ENCODE measurements at regions of chr16 and their contacts with region 1.

Region 1: GRCh38 chr16:68528686-68529379 is 10.3 kb upstream of the ZFP90 start:
- DNase-seq: peak; percentile 89 to 96
- ATAC-seq: peak; percentile 93 to 94 (median 93)
- H3K4me3 ChIP-seq: no peak overlapping the region
- H3K4me3 Mint-ChIP-seq: peak overlapping the region; percentile 90
- H3K27ac ChIP-seq: no peak overlapping the region
- H3K27ac Mint-ChIP-seq: peak overlapping the region; percentile 58 to 78
- H3K4me1 ChIP-seq: peaks cover 25% of the 10 kb centered on the region
- H3K4me1 Mint-ChIP-seq: peaks cover 18 to 22% of the 10 kb centered on the region in 2 donors
- H3K27me3 ChIP-seq: peaks cover 6% of the 10 kb centered on the region
- H3K27me3 Mint-ChIP-seq: peaks cover 0 to 7% of the 10 kb centered on the region in 2 donors
- CTCF ChIP-seq: peak; percentile 90

Region 2: GRCh38 chr16:68538880-68539701 is 10.3 kb after region 1 on chr16 and contains the start of gene ZFP90:
- intact Hi-C with region 1: no loop called
- DNase-seq: peak; percentile 83 to 92
- ATAC-seq: peak; percentile 86 to 94 (median 91)
- H3K4me3 ChIP-seq: peak within 1 kb of the TSS; percentile 99
- H3K4me3 Mint-ChIP-seq: peak within 1 kb of the TSS; percentile 99
- H3K27ac ChIP-seq: peak within 1 kb of the TSS; percentile 95
- H3K27ac Mint-ChIP-seq: peak within 1 kb of the TSS; percentile 97 to 100
- H3K4me1 ChIP-seq: peaks cover 16% of the 10 kb centered on the region
- H3K4me1 Mint-ChIP-seq: peaks cover 22 to 41% of the 10 kb centered on the region in 2 donors
- H3K27me3 ChIP-seq: no peaks in the 10 kb centered on the region
- H3K27me3 Mint-ChIP-seq: no peaks in the 10 kb centered on the region
- CTCF ChIP-seq: no peak
- total RNA-seq, gene ZFP90: 23.1 to 36.0 (median 35.3) TPM

Region 3: GRCh38 chr16:68592466-68593337 is 63.9 kb after region 1 on chr16:
- intact Hi-C with region 1: loop called (anchors 2 kb)
- DNase-seq: peak in 1 of 2 donors; percentile 64
- ATAC-seq: peak; percentile 42 to 55 (median 49)
- H3K4me3 ChIP-seq: no peak overlapping the region
- H3K4me3 Mint-ChIP-seq: no peak overlapping the region
- H3K27ac ChIP-seq: no peak overlapping the region
- H3K27ac Mint-ChIP-seq: no peak overlapping the region
- H3K4me1 ChIP-seq: peaks cover 6% of the 10 kb centered on the region
- H3K4me1 Mint-ChIP-seq: peaks cover 5 to 6% of the 10 kb centered on the region in 2 donors
- H3K27me3 ChIP-seq: no peaks in the 10 kb centered on the region
- H3K27me3 Mint-ChIP-seq: peaks cover 0 to 3% of the 10 kb centered on the region in 2 donors
- CTCF ChIP-seq: peak; percentile 41

Region 4: DNA sequence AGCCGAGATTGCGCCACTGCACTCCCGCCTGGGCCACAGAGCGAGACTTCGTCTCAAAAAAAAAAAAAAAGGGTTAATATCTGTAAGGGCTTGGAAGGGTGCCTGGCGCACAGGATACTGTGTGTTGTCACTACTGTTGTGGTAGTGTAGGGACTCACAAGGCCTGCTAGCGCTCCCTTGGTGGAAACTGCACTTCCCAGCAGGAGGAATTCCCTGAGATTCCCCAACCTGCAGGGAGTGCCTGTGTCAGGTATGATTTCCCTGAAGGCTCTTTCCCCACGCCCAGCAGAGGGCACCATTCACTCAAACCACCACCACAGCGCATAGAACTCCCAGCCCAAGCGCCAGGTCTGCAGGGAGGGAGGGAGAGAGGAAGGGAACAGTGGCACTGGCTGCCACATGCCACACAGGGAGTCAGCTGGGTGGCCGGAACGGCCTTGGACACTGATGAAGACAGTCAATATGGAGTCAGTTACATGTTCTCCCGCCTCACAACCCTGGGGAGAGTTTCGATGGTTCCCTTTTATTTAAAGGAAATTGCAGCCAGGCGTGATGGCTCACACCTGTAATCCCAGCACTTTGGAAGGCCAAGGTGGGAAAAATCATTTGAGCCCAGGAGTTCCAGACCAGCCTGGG is 175.5 kb after region 1 on chr16:
- intact Hi-C with region 1: loop called (anchors 10 kb)
- DNase-seq: peak; percentile 27 to 69
- ATAC-seq: peak in 1 of 3 donors; percentile 59
- H3K4me3 ChIP-seq: no peak overlapping the region
- H3K4me3 Mint-ChIP-seq: no peak overlapping the region
- H3K27ac ChIP-seq: no peak overlapping the region
- H3K27ac Mint-ChIP-seq: no peak overlapping the region
- H3K4me1 ChIP-seq: peaks cover 6% of the 10 kb centered on the region
- H3K4me1 Mint-ChIP-seq: no peaks in the 10 kb centered on the region
- H3K27me3 ChIP-seq: no peaks in the 10 kb centered on the region
- H3K27me3 Mint-ChIP-seq: peaks cover 0 to 4% of the 10 kb centered on the region in 2 donors
- CTCF ChIP-seq: peak; percentile 36

Region 5: DNA sequence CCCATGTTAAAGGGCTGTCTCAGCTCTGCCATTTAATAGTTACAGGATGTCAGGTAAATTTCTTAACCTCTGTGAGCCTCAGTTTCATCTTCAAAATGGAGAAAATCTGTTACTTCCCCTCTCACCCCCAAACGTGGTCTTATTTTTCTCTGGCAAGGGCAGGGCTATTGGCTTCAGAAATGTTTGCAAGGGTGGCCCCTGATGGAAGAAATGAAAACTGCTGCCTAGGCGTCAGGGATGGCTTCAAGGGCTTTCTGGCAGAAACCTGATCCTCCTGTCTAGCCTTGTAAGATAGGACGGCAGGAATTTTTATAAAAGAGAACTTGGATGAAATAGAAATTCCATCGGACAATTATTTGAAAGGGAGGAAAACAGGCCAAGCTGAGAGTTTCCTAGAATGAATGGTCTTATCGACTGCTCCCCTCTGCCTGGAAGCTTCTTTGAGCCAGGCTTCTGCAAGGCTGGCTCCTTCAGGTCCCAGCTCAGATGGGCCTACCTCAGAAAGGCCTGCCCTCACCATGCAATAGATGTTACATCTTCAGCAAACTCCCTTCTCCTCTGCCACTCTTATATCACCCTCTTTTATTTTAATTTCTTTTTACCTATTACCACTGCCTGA is 271.5 kb after region 1 on chr16:
- intact Hi-C with region 1: loop called (anchors 2 kb)
- DNase-seq: peak in 1 of 2 donors; percentile 56
- ATAC-seq: peak in 2 of 3 donors; percentile 54 to 69
- H3K4me3 ChIP-seq: no peak overlapping the region
- H3K4me3 Mint-ChIP-seq: no peak overlapping the region
- H3K27ac ChIP-seq: no peak overlapping the region
- H3K27ac Mint-ChIP-seq: no peak overlapping the region
- H3K4me1 ChIP-seq: no peaks in the 10 kb centered on the region
- H3K4me1 Mint-ChIP-seq: no peaks in the 10 kb centered on the region
- H3K27me3 ChIP-seq: no peaks in the 10 kb centered on the region
- H3K27me3 Mint-ChIP-seq: no peaks in the 10 kb centered on the region
- CTCF ChIP-seq: peak; percentile 32

Region 6: GRCh38 chr16:68843482-68844210 is 314.8 kb after region 1 on chr16 and contains the start of gene TANGO6:
- intact Hi-C with region 1: loop called (anchors 2 kb)
- DNase-seq: peak; percentile 85 to 93
- ATAC-seq: peak; percentile 96 to 98 (median 96)
- H3K4me3 ChIP-seq: peak within 1 kb of the TSS; percentile 89
- H3K4me3 Mint-ChIP-seq: peak within 1 kb of the TSS; percentile 99
- H3K27ac ChIP-seq: peak within 1 kb of the TSS; percentile 70
- H3K27ac Mint-ChIP-seq: peak within 1 kb of the TSS; percentile 69 to 88
- H3K4me1 ChIP-seq: peaks cover 21% of the 10 kb centered on the region
- H3K4me1 Mint-ChIP-seq: peaks cover 27% of the 10 kb centered on the region in 2 donors
- H3K27me3 ChIP-seq: no peaks in the 10 kb centered on the region
- H3K27me3 Mint-ChIP-seq: no peaks in the 10 kb centered on the region
- CTCF ChIP-seq: no peak
- total RNA-seq, gene TANGO6: 21.2 to 27.3 (median 23.9) TPM

Region 7: DNA sequence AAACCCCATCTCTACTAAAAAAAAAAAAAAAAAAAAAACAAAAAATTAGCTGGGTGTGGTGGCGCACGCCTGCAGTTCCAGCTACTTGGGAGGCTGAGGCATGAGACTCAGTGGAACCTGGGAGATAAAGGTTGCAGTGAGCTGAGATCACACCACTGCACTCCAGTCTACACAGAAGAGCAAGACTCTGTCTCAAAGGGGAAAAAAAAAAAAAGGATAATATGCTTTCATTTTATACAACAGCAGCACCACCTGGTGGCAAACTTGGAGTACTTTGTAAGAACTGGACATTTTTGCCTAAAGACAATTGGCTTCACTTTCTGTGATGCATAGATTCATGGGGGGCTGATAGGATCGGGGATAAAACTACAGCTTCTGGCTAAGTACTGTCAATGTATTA is 595.1 kb after region 1 on chr16:
- intact Hi-C with region 1: loop called (anchors 1 kb)
- DNase-seq: peak; percentile 51 to 85
- ATAC-seq: peak; percentile 75 to 97 (median 85)
- H3K4me3 ChIP-seq: no peak overlapping the region
- H3K4me3 Mint-ChIP-seq: no peak overlapping the region
- H3K27ac ChIP-seq: no peak overlapping the region
- H3K27ac Mint-ChIP-seq: no peak overlapping the region
- H3K4me1 ChIP-seq: no peaks in the 10 kb centered on the region
- H3K4me1 Mint-ChIP-seq: peaks cover 10 to 22% of the 10 kb centered on the region in 2 donors
- H3K27me3 ChIP-seq: no peaks in the 10 kb centered on the region
- H3K27me3 Mint-ChIP-seq: no peaks in the 10 kb centered on the region
- CTCF ChIP-seq: peak; percentile 71